CD4-positive, alpha-beta T cell (primary cell): ENCODE measurements at regions of chr18 and their contacts with region 1.

Region 1: GRCh38 chr18:58671111-58671631 is at the start of gene MALT1:
- DNase-seq: peak; percentile 87 to 99 (median 96)
- ATAC-seq: peak; percentile 84
- H3K4me3 ChIP-seq: peak within 1 kb of the TSS; percentile 90
- H3K4me3 Mint-ChIP-seq: peak within 1 kb of the TSS; percentile 99
- H3K27ac ChIP-seq: peak within 1 kb of the TSS; percentile 52 to 64
- H3K27ac Mint-ChIP-seq: peak within 1 kb of the TSS; percentile 96
- H3K4me1 ChIP-seq: peaks cover 44% of the 10 kb centered on the region
- H3K4me1 Mint-ChIP-seq: peaks cover 68% of the 10 kb centered on the region
- H3K27me3 ChIP-seq: no peaks in the 10 kb centered on the region
- H3K27me3 Mint-ChIP-seq: no peaks in the 10 kb centered on the region
- CTCF ChIP-seq: no peak
- total RNA-seq, gene MALT1: 82.3 to 84.5 TPM

Region 2: DNA sequence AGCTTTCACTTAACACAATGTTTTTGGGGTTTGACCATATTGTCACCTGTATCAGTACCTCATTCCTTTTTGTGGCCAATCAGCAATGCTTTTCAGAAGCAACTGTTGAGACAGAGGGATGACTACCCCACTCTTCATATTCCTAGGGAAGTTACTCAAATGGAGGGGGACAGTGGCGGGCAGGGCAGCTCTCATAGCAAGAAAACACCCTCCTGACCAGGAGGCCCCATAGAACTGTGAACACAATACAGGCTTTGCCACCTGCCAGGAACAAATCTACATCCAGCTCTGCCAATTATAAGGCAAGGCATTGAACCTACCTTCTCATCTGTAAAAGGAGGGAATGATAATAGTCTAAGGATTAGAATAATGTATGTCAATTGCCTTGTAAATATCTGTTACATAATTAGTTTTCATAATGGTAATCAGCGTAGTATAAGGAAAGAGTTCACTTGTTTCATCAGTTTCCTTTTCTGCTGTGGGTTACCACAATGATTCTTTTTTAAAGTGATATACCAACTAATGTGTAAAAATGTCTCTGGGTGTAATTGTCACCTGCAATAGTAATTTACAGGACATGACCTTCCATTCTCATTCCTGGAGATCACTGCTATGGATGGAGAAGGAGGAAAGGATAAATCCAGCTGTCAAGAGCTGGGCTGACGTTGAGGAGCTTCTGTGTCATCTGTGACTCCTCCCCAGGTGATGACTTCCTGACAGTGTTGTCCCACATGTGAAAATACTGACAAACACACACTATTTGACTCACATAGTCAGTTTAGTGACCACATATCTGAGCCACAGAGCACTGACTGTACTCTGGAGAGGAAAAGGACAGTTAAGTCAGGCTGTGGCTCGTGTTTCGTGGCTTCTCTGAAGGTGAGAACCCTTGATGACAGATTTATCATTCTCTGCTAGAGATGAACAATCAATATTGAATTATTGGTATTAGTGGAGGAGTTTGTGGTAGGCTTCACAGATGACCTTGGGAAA is 55.7 kb before region 1 on chr18:
- CTCF ChIA-PET with region 1: no interaction called
- POLR2A ChIA-PET with region 1: interaction called, 35 read pairs
- intact Hi-C with region 1: loop called in 1 of 2 experiments (anchors 5 kb)
- DNase-seq: peak in 13 of 14 experiments; percentile 17 to 93 (median 37)
- ATAC-seq: peak; percentile 93
- H3K4me3 ChIP-seq: peak overlapping the region; percentile 34
- H3K4me3 Mint-ChIP-seq: peak overlapping the region; percentile 81
- H3K27ac ChIP-seq: peak overlapping the region; percentile 60 to 91
- H3K27ac Mint-ChIP-seq: peak overlapping the region; percentile 94
- H3K4me1 ChIP-seq: peaks cover 46% of the 10 kb centered on the region
- H3K4me1 Mint-ChIP-seq: peaks cover 53% of the 10 kb centered on the region
- H3K27me3 ChIP-seq: no peaks in the 10 kb centered on the region
- H3K27me3 Mint-ChIP-seq: no peaks in the 10 kb centered on the region
- CTCF ChIP-seq: no peak

Region 3: DNA sequence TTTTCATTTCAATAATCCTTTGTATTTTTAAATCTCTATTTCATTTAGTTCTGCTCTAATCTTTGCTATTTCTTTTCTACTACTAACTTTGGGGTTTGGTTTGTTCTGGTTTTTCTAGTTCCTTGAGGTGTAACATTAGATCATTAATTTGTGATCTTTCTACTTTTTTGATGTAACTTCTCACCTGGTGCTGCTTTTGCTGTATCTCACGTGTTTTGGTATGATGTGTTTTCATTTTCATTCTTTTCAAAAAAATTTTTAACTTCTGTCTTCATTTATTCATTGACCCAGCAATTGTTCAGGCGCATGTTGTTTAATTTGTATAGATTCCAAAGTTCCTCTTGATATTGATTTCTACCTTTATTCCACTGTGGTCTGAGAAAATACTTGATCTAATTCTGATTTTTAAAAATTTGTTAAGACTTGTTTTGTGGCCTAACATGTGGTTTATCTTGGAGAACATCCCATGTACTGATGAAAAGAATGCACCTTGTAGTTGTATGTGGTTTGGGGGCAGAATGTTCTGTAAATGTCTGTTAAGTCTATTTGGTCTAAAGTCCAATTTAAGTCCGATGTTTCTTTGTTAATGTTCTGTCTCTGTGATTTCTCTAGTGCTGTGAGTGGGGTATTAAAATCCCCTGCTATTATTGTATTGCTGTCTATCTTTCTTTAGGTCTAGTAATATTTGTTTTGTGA is 17.2 kb before region 1 on chr18:
- CTCF ChIA-PET with region 1: interaction called, 21 read pairs
- POLR2A ChIA-PET with region 1: interaction called, 166 read pairs
- intact Hi-C with region 1: loop called in 1 of 2 experiments (anchors 1 kb)
- DNase-seq: no peak
- ATAC-seq: no peak
- H3K4me3 ChIP-seq: no peak overlapping the region
- H3K4me3 Mint-ChIP-seq: peak overlapping the region; percentile 2
- H3K27ac ChIP-seq: no peak overlapping the region
- H3K27ac Mint-ChIP-seq: peak overlapping the region; percentile 31
- H3K4me1 ChIP-seq: peaks cover 47% of the 10 kb centered on the region
- H3K4me1 Mint-ChIP-seq: peaks cover 88% of the 10 kb centered on the region
- H3K27me3 ChIP-seq: no peaks in the 10 kb centered on the region
- H3K27me3 Mint-ChIP-seq: no peaks in the 10 kb centered on the region
- CTCF ChIP-seq: no peak

Region 4: GRCh38 chr18:58699551-58699950 is 28.4 kb after region 1 on chr18:
- CTCF ChIA-PET with region 1: interaction called, 4 read pairs
- POLR2A ChIA-PET with region 1: interaction called, 29 read pairs
- intact Hi-C with region 1: no loop called
- DNase-seq: peak in 3 of 14 experiments; percentile 40 to 46 (median 43)
- ATAC-seq: no peak
- H3K4me3 ChIP-seq: no peak overlapping the region
- H3K4me3 Mint-ChIP-seq: no peak overlapping the region
- H3K27ac ChIP-seq: no peak overlapping the region
- H3K27ac Mint-ChIP-seq: no peak overlapping the region
- H3K4me1 ChIP-seq: peaks cover 28% of the 10 kb centered on the region
- H3K4me1 Mint-ChIP-seq: peaks cover 44% of the 10 kb centered on the region
- H3K27me3 ChIP-seq: no peaks in the 10 kb centered on the region
- H3K27me3 Mint-ChIP-seq: no peaks in the 10 kb centered on the region
- CTCF ChIP-seq: no peak

Region 5: DNA sequence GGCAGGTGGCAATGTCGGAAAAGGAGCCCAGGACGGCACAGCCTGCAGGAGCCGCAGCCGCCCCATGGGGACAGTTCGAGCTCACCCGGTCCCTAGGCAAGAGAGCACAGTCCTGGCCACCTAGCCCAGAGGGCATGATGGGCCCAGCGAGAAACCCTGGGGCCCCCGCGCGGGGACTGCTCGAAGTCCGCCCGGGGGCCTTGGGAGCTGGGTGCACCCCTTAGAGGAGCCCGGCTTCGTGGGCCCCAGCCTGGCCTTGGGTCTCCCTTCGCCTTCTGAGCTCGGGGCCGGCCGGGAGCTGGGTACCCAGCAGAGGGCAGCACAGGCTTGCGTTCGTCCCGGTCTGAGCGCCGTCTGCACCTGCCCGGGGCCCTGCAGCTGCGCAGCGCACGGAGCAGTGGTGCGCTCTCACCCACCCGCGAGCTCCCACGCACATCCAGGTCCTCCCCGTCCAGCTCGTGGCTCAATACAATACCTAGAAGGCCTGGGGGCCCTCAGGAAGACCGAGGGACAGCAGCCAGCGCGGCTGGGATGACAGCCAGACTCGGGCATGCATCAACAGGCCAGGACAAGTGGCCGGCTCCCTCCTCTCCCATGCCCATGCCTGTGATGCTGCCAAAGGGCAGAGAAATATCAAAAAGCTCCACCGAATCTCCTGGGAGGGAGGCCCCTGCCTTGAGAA is 97.3 kb after region 1 on chr18:
- CTCF ChIA-PET with region 1: interaction called, 11 read pairs
- POLR2A ChIA-PET with region 1: interaction called, 27 read pairs
- intact Hi-C with region 1: no loop called
- DNase-seq: peak; percentile 54 to 81 (median 62)
- ATAC-seq: peak; percentile 81
- H3K4me3 ChIP-seq: peak overlapping the region; percentile 14
- H3K4me3 Mint-ChIP-seq: no peak overlapping the region
- H3K27ac ChIP-seq: no peak overlapping the region
- H3K27ac Mint-ChIP-seq: no peak overlapping the region
- H3K4me1 ChIP-seq: peaks cover 17% of the 10 kb centered on the region
- H3K4me1 Mint-ChIP-seq: peaks cover 15% of the 10 kb centered on the region
- H3K27me3 ChIP-seq: peaks cover 14 to 36% of the 10 kb centered on the region in 2 experiments
- H3K27me3 Mint-ChIP-seq: peaks cover 72% of the 10 kb centered on the region
- CTCF ChIP-seq: peak; percentile 67